Activated CD8-positive, alpha-beta T cell treated with anti-CD3 and anti-CD28 coated beads, Interleukin-2, amount 10 ng/mL, durations not matched to agents 7 days and 5 days (primary cell): ENCODE measurements at regions of chr1 and their contacts with region 1.

Region 1: DNA sequence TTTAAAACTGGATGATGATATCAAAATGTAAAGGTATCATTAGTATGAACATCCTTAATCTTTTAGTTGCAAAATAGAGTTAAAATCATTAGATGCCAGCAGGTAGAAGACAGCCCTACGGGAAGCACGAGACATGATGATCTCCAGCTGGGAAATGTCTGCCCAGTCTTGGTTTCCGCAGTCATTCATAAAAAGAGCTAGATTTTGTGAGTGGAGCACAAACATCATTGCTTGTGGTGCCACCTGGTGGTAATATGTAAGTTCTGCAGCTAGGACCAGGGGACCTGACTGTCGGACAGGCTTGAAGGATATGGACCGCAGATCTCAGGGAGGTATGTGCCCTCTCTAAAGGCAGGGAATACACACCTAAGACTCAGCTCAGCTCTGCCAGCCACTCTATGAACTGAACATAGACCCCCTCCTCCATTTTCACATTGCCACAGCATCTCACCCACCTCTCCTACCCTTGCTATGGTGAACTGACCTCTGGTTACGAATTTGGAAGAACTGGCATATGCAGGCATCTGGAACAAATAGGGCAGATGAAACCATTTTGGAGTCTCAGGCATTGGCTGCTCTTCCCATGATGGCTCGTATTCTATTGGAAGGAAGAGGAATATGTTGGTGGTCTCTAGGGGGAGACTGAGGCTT is 9.2 kb downstream of the FCMR start:
- DNase-seq: peak; percentile 80
- ATAC-seq: peak; percentile 64
- H3K4me3 Mint-ChIP-seq: no peak overlapping the region
- H3K27ac Mint-ChIP-seq: no peak overlapping the region
- H3K4me1 Mint-ChIP-seq: peaks cover 65% of the 10 kb centered on the region
- H3K27me3 Mint-ChIP-seq: no peaks in the 10 kb centered on the region

Region 2: DNA sequence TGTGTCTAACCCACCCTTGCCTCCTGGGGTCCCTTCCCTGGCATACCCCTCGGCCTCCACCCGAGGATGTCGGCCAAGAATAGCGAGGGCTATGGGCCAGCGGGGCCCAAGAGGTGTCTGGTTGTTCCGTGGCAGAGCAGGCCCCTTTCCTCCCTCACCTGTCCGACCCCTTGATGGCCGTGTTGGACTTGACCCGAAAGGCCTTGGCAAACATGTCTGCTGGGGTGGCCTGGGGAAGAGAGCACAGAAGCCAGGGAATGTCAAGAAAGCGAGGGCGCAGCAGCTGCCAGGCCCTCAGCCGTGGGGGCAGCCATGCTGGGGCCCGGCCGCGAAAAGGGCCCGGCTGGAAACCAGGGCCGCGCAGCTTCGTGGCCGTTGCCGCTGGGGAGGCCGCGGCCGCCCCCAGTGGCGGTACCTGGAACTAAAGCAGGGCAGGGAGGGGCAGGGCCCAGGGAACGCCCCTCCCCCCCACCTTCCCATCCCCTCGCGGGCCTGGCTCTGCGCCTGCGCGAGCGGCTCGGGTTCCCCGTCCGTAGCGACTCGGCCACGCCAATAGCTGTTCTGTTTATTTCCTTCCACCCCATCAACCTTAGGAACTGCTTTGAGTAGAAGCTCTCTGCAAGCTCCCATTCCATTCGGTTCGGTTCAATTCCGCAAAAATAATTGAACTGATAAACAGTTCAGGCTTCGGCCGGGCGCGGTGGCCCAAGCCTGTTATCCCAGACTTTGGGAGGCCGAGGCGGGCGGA is 300.3 kb before region 1 on chr1 and contains the start of gene EIF2D:
- CTCF ChIA-PET with region 1: interaction called, 13 read pairs
- POLR2A ChIA-PET with region 1: no interaction called
- DNase-seq: peak; percentile 95
- ATAC-seq: peak; percentile 98
- H3K4me3 Mint-ChIP-seq: peak within 1 kb of the TSS; percentile 94
- H3K27ac Mint-ChIP-seq: peak within 1 kb of the TSS; percentile 90
- H3K4me1 Mint-ChIP-seq: peaks cover 35% of the 10 kb centered on the region
- H3K27me3 Mint-ChIP-seq: peaks cover 10% of the 10 kb centered on the region
- total RNA-seq, gene EIF2D: 41.6 to 45.1 TPM

Region 3: GRCh38 chr1:206716870-206717673 is 195.5 kb before region 1 on chr1:
- CTCF ChIA-PET with region 1: interaction called, 26 read pairs
- POLR2A ChIA-PET with region 1: interaction called, 8 read pairs
- DNase-seq: peak; percentile 52
- ATAC-seq: peak; percentile 67
- H3K4me3 Mint-ChIP-seq: peak overlapping the region; percentile 26
- H3K27ac Mint-ChIP-seq: peak overlapping the region; percentile 75
- H3K4me1 Mint-ChIP-seq: peaks cover 69% of the 10 kb centered on the region
- H3K27me3 Mint-ChIP-seq: no peaks in the 10 kb centered on the region

Region 4: GRCh38 chr1:206766251-206766856 is 146.2 kb before region 1 on chr1:
- CTCF ChIA-PET with region 1: interaction called, 49 read pairs
- POLR2A ChIA-PET with region 1: no interaction called
- DNase-seq: peak; percentile 85
- ATAC-seq: peak; percentile 80
- H3K4me3 Mint-ChIP-seq: peak overlapping the region; percentile 61
- H3K27ac Mint-ChIP-seq: peak overlapping the region; percentile 68
- H3K4me1 Mint-ChIP-seq: peaks cover 70% of the 10 kb centered on the region
- H3K27me3 Mint-ChIP-seq: peaks cover 19% of the 10 kb centered on the region

Region 5: DNA sequence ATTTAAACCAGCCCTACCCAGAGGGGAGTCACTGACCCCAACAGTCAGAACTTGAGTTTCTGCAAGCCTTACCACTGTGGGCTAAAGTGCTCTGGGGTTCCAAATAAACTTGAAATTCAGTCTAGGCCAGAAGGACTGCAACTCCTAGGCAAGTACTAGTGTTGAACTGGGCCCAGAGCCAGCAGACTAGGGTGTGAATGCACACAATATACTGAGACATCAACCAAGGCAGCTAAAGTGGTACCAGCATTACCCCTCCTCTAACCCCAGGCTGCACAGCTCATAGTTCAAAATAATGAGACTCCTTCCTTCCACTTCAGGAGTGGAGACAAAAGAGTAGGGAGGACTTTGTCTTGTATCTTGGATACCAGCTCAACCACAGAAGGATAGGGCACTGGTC is 66.1 kb before region 1 on chr1:
- CTCF ChIA-PET with region 1: interaction called, 12 read pairs
- POLR2A ChIA-PET with region 1: no interaction called
- DNase-seq: no peak
- ATAC-seq: no peak
- H3K4me3 Mint-ChIP-seq: no peak overlapping the region
- H3K27ac Mint-ChIP-seq: no peak overlapping the region
- H3K4me1 Mint-ChIP-seq: no peaks in the 10 kb centered on the region
- H3K27me3 Mint-ChIP-seq: peaks cover 18% of the 10 kb centered on the region

Region 6: DNA sequence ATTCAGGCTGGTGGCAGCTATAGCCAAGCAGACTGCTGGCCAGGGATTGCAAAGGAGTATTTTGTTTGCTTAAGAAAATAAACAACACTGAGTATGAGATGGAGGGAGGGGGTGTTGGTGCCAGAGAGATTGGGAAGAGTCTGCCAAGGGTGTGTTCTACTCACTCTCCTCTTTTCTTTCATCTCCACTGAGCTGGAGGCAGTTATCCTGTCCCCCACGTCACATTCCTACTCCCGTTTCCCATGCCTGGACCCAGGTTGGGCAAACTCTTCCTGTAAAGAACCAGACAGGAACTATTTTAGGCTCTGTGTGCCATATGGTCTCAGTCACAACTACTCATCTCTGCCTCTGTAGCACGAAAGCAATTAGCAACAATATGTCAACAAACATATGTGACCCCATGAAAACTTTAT is 16.7 kb before region 1 on chr1:
- CTCF ChIA-PET with region 1: interaction called, 17 read pairs
- POLR2A ChIA-PET with region 1: interaction called, 4 read pairs
- DNase-seq: peak; percentile 9
- ATAC-seq: no peak
- H3K4me3 Mint-ChIP-seq: no peak overlapping the region
- H3K27ac Mint-ChIP-seq: no peak overlapping the region
- H3K4me1 Mint-ChIP-seq: peaks cover 10% of the 10 kb centered on the region
- H3K27me3 Mint-ChIP-seq: peaks cover 2% of the 10 kb centered on the region

Region 7: DNA sequence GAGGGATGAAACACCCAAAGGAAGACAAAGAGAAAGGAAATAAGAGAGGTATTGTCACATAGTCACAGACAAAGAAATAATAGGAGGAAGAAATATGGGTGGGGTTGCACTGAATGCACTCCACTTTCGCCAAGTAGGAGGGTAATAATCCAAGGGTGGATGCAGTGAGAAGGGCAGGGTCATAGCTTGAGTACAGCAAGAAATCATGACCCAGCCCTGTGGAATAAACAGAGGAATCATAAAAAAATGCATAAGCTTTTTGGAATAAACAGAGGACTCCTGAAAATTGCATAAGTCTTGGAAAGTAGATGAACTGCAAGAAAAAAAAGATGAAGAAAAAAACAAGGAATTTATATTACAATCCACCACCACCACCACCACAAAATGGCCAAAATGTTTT is 355.8 kb after region 1 on chr1:
- CTCF ChIA-PET with region 1: no interaction called
- POLR2A ChIA-PET with region 1: no interaction called
- DNase-seq: no peak
- ATAC-seq: no peak
- H3K4me3 Mint-ChIP-seq: no peak overlapping the region
- H3K27ac Mint-ChIP-seq: no peak overlapping the region
- H3K4me1 Mint-ChIP-seq: no peaks in the 10 kb centered on the region
- H3K27me3 Mint-ChIP-seq: no peaks in the 10 kb centered on the region

Region 8: GRCh38 chr1:207321079-207321789 is 408.7 kb after region 1 on chr1 and contains the start of gene CD55:
- CTCF ChIA-PET with region 1: no interaction called
- POLR2A ChIA-PET with region 1: no interaction called
- DNase-seq: peak; percentile 100
- ATAC-seq: peak; percentile 93
- H3K4me3 Mint-ChIP-seq: peak within 1 kb of the TSS; percentile 92
- H3K27ac Mint-ChIP-seq: peak within 1 kb of the TSS; percentile 99
- H3K4me1 Mint-ChIP-seq: peaks cover 29% of the 10 kb centered on the region
- H3K27me3 Mint-ChIP-seq: no peaks in the 10 kb centered on the region
- total RNA-seq, gene CD55: 82.1 to 85.5 TPM